ENCODE measurements at regions of chr1 and their contacts with region 1.

Region 1: GRCh38 chr1:39408641-39409054 is 82.8 kb upstream of the BMP8A start:
- DNase-seq: peak; percentile 89 to 94 (median 94)
- H3K4me3 ChIP-seq: peak overlapping the region; percentile 67 to 83 (median 75)
- H3K27ac ChIP-seq: peak overlapping the region in 1 of 2 experiments; percentile 75
- H3K4me1 ChIP-seq: peaks cover 17 to 34% (median 29%) of the 10 kb centered on the region in 4 experiments
- H3K27me3 ChIP-seq: no peaks in the 10 kb centered on the region

Region 2: GRCh38 chr1:39326832-39327231 is 81.8 kb before region 1 on chr1:
- CTCF ChIA-PET with region 1: no interaction called
- POLR2A ChIA-PET with region 1: no interaction called
- DNase-seq: peak in 2 of 3 donors; percentile 3 to 5
- H3K4me3 ChIP-seq: no peak overlapping the region
- H3K27ac ChIP-seq: no peak overlapping the region
- H3K4me1 ChIP-seq: no peaks in the 10 kb centered on the region
- H3K27me3 ChIP-seq: no peaks in the 10 kb centered on the region

Region 3: DNA sequence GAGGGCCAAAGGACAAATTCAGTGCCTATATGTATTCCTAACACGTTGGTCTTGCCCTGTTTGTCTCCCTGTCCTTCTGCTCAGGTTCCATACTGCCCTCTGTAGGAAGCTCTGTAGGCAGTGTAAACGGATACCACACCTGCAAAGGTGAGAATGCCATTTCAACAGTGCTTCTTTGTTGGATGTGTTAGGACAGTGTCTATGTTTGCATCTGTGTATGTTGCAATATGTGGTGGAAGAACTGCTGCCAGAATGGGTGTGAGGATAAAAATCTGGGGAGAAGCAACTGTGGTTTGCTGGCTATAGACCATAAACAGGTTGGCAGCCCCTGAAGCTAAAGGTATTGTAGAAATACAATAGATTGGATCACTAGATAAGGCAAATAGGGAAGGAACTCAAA is 30.3 kb before region 1 on chr1:
- CTCF ChIA-PET with region 1: no interaction called
- POLR2A ChIA-PET with region 1: no interaction called
- DNase-seq: peak in 2 of 3 donors; percentile 4 to 9
- H3K4me3 ChIP-seq: no peak overlapping the region
- H3K27ac ChIP-seq: no peak overlapping the region
- H3K4me1 ChIP-seq: no peaks in the 10 kb centered on the region
- H3K27me3 ChIP-seq: no peaks in the 10 kb centered on the region

Region 4: DNA sequence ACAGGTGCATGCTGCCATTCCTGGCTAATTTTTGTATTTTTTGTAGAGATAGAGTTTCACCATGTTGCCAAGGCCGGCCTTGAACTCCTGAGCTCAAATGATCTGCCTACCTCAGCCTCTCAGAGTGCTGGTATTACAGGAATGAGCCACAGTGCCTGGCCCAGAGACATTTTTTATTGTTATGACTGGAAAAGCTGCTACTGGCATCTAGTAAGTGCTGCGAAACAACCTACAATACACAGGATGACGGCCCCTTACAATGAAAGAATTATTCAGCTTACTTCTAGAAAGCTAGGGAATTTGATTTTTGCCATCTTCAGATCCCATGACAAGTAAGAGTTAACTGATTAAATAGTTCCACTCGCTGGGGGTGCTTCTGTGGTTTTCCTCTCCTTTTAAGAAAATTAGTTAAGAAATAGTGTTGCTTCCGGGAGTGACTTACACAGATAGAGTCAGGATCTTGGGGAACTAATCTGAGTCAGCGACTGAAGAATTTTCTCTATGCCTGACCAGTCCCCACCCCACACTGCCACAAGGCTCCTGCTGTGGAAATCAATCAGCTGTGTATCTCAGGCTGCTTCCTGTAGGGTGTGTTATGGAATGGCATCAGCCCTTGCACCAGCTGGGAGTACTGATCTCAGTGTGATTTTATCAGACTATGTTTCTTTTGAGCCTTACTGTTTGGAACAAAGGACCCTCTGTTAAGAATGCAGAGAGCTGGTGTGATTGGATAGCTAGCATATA is 10.2 kb before region 1 on chr1:
- CTCF ChIA-PET with region 1: interaction called, 32 read pairs
- POLR2A ChIA-PET with region 1: no interaction called
- DNase-seq: peak; percentile 42 to 73 (median 68)
- H3K4me3 ChIP-seq: peak overlapping the region in 2 of 7 experiments; percentile 17 to 32
- H3K27ac ChIP-seq: no peak overlapping the region
- H3K4me1 ChIP-seq: peaks cover 18 to 37% (median 27%) of the 10 kb centered on the region in 4 experiments
- H3K27me3 ChIP-seq: no peaks in the 10 kb centered on the region